Caco-2 (cell line): ENCODE measurements at regions of chr6 and their contacts with region 1.

Region 1: DNA sequence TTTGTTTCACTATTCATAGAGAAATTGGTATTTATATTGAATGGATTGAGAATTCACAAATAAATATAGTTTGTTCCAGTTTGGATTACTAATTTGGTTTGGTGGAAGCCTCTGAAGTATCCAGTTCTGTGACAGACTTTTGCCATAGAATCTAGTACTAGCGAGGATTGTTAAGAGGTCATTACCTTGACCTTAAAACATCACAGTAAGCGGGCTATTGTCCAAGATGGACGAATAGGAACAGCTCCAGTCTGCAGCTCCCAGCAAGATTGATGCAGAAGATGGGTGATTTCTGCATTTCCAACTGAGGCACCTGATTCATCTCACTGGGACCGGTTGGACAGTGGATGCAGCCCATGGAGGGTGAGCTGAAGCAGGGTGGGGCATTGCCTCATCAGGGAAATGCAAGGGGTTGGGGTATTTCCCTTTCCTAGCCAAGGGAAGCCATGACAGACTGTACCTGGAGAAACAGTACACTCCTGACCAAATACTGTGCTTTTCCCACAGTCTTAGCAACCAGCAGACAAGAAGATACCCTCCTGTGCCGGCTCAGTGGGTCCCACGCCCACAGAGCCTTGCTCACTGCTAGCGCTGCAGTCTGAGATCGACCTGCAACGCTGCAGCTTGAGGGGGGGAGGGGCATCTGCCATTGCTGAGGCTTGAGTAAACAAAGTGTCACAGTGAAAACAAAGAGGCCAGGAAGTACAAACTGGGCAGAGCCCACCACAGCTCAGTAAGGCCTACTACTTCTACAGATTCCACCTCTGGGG is 66.4 kb upstream of the NEDD9 start:
- DNase-seq: no peak
- H3K4me3 ChIP-seq: no peak overlapping the region
- H3K4me3 Mint-ChIP-seq: no peak overlapping the region
- H3K27ac Mint-ChIP-seq: no peak overlapping the region
- H3K4me1 ChIP-seq: peaks cover 35% of the 10 kb centered on the region
- H3K4me1 Mint-ChIP-seq: peaks cover 33% of the 10 kb centered on the region
- H3K27me3 ChIP-seq: no peaks in the 10 kb centered on the region
- H3K27me3 Mint-ChIP-seq: no peaks in the 10 kb centered on the region
- CTCF ChIP-seq: no peak

Region 2: DNA sequence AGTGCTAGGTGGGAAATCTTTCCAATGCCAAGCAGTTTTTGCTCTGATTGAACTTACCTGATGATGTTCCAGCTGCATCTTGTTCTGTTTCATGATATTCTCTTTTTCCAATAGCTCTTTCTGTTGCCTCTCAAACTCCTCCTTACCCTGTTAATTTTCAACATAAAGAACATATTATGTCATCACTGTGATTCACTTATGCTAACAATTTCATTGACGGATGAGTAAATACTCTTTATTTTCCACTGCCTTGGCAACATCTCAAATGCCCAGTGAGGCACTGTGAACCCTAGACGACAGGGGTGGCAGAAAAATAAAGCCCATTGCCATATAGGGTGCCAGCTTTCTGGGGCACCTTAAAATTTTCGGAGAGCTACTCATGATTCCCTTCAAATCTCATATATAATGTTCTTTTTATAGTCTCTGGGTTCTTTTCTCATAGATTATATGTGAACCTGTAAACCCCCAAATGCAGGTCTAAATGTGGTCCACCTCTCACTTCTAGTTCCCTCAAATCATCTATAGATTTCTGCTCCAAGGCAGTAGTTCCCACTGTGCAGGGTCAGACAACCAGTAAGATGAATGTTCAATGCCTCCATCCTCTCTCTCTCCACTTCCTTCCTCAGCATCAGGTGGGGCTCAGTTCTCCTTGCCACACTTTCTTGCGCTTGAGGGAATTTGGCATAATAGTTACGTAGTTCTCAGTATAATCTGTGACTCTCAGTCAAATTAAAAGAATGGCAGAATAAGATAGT is 110.5 kb before region 1 on chr6:
- CTCF ChIA-PET with region 1: no interaction called
- POLR2A ChIA-PET with region 1: no interaction called
- intact Hi-C with region 1: no loop called
- DNase-seq: no peak
- H3K4me3 ChIP-seq: no peak overlapping the region
- H3K4me3 Mint-ChIP-seq: peak overlapping the region; percentile 4
- H3K27ac Mint-ChIP-seq: no peak overlapping the region
- H3K4me1 ChIP-seq: no peaks in the 10 kb centered on the region; the same call in 1 of the 2 replicates
- H3K4me1 Mint-ChIP-seq: peaks cover 10% of the 10 kb centered on the region
- H3K27me3 ChIP-seq: no peaks in the 10 kb centered on the region
- H3K27me3 Mint-ChIP-seq: no peaks in the 10 kb centered on the region
- CTCF ChIP-seq: no peak

Region 3: DNA sequence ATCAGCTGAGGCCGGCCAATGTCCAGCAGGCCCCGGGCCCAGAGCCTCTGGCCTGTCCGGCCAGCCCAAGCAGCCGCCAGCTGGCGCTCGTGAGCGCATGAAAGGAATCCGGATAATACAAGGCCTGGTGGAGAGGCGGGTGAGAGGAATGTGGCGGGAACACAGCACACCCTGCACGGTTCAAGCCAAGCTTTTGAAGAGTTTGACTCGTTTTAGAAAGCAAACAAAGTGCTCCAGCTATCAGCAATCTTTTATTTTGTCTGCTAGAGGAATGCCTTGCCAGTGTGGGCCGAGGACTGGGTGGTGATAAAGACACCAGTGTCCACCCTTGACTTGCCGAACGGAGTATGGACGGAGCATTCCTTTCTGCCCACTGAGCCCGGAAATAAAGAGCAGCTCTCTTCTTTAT is 57.0 kb before region 1 on chr6:
- CTCF ChIA-PET with region 1: no interaction called
- POLR2A ChIA-PET with region 1: no interaction called
- intact Hi-C with region 1: loop called (anchors 2 kb)
- DNase-seq: peak; percentile 65 to 70
- H3K4me3 ChIP-seq: no peak overlapping the region
- H3K4me3 Mint-ChIP-seq: no peak overlapping the region
- H3K27ac Mint-ChIP-seq: no peak overlapping the region
- H3K4me1 ChIP-seq: peaks cover 17% of the 10 kb centered on the region
- H3K4me1 Mint-ChIP-seq: peaks cover 36% of the 10 kb centered on the region
- H3K27me3 ChIP-seq: no peaks in the 10 kb centered on the region
- H3K27me3 Mint-ChIP-seq: no peaks in the 10 kb centered on the region
- CTCF ChIP-seq: peak in 1 of 2 experiments; percentile 63

Region 4: DNA sequence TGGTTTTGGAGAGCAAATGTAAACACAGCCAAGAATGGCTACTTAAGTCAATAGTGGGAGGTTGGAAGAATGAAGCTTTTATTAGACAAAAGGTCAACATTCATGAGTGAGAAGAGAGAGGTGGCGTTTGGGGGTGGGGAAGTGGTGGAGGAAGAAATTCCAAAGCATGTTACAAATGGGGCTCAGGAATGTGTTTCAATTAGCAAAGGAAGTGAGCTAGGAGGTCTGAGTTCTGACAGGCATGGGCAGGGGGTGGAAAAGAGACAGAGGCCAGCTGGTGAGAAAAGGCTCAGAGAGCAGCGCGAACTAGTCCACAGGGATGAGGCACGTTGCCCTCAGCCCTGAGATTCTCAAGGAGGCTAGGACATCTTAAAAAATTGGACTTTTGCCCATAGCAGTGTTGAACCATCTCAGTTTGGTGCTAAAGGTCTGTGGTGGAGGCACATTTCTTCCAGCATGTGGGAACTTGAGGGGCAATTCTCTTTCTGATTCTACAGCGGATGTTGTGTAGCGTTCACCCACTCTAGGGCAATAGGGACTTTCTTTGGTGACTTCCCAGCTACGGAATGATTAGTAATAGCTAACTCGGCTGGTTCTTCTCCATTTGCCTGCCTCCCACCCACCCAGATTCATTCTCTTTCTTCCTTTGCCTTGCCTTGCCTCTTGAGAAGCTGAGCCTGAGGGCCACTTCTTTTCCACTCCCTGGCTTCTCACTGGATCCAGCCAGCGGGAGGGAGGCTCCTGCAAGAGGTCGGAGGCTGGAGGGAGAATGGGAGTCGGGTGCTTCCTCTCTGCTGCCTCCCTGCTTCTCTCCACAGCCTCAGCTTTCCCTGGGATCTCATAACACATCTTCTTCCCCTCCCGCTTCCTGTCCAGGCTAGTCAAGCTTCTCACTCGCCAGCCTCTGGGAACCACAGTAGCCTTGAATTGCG is 21.3 kb before region 1 on chr6:
- CTCF ChIA-PET with region 1: interaction called, 3 read pairs
- POLR2A ChIA-PET with region 1: interaction called, 8 read pairs
- intact Hi-C with region 1: loop called (anchors 1 kb)
- DNase-seq: peak; percentile 77 to 84
- H3K4me3 ChIP-seq: no peak overlapping the region
- H3K4me3 Mint-ChIP-seq: peak overlapping the region; percentile 15
- H3K27ac Mint-ChIP-seq: peak overlapping the region; percentile 95
- H3K4me1 ChIP-seq: peaks cover 38% of the 10 kb centered on the region
- H3K4me1 Mint-ChIP-seq: peaks cover 39% of the 10 kb centered on the region
- H3K27me3 ChIP-seq: no peaks in the 10 kb centered on the region
- H3K27me3 Mint-ChIP-seq: no peaks in the 10 kb centered on the region
- CTCF ChIP-seq: no peak

Region 5: DNA sequence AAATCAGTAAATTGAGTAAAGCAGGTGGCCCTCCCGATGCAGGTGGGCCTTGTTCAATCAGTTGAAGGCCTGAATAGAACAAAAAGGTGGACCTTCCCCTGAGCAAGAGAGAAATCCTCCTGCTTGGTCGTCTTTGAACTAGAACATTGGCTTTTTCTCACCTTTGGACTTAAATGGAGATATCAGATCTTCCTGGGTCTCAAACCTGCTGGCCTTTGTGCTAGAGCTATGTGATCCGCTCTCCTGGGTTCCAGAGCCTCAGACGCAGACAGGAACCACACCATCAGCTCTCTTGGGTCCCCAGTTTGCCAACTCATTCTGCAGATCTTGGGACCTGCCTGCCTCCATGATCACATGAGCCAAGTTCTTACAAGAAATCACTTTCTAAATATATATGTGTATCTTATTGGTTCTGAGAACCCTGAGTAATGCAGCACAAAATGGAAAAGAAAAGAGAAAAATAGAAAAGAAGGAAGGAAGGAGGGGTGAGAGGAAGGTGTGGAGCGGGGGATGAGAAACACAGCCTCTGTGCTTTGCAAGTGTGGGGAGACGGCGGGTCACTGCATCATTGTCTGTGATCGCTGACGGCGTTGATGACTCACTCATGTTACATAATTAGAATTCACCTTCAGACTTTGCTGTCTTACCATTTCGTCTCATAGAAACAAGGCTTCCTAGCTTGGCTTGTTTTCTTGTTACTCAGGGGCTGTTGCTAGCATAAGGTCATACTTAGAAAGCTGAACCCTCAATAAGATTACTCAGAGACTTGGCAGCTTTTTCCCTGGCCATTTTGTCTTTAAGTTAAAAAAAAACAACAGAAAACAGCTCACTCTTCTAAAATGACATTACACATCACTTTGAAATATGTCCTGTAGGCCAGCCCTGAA is 19.3 kb after region 1 on chr6:
- CTCF ChIA-PET with region 1: no interaction called
- POLR2A ChIA-PET with region 1: no interaction called
- intact Hi-C with region 1: loop called (anchors 1 kb)
- DNase-seq: peak; percentile 74 to 77
- H3K4me3 ChIP-seq: no peak overlapping the region
- H3K4me3 Mint-ChIP-seq: peak overlapping the region; percentile 30
- H3K27ac Mint-ChIP-seq: peak overlapping the region; percentile 65
- H3K4me1 ChIP-seq: peaks cover 31% of the 10 kb centered on the region
- H3K4me1 Mint-ChIP-seq: peaks cover 40% of the 10 kb centered on the region
- H3K27me3 ChIP-seq: no peaks in the 10 kb centered on the region
- H3K27me3 Mint-ChIP-seq: no peaks in the 10 kb centered on the region
- CTCF ChIP-seq: no peak